ENCODE measurements at regions of chr5 and their contacts with region 1.

Region 1: DNA sequence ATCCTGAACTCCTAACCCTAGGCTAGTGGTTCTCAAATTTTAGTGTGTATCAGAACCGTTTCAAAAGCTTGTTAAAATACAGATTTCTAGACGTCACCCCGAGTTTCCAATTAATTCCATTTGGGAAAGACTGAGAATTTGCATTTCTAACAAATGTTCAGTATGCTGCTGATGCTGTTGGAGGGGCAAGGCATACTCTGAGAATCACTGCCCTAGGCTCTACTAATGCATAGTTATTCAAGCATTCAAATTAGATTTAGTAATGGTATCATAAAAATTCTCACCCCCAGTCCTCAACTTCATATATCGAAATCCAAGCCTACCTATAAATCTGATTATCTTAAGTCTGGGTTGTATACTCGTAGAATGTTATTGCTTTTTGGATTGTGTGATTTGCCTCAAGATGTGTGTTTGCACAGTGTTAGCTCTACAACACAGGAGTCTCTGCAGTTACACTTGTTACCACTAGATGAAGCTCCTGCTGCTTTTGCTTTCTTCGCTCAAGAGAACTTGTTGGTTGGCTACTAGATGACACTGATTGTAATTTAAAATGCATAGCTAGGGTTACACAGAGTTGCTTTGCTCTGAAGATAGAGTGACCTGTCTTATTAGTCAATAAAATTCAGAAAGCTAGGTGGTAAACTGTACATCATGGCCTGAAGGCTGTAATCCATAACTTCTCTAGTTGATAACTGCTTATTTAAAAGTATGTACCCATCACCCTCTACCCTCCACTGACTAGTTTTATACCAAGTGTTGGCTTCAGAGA is 7.5 kb upstream of the ERAP2 start:
- DNase-seq: no peak
- H3K4me3 Mint-ChIP-seq: no peak overlapping the region
- H3K27ac Mint-ChIP-seq: peak overlapping the region; percentile 82
- H3K4me1 Mint-ChIP-seq: peaks cover 54% of the 10 kb centered on the region
- H3K27me3 Mint-ChIP-seq: no peaks in the 10 kb centered on the region

Region 2: GRCh38 chr5:96896806-96897205 is 28.0 kb after region 1 on chr5:
- CTCF ChIA-PET with region 1: interaction called, 23 read pairs
- POLR2A ChIA-PET with region 1: interaction called, 50 read pairs
- DNase-seq: no peak
- H3K4me3 Mint-ChIP-seq: peak overlapping the region; percentile 67
- H3K27ac Mint-ChIP-seq: peak overlapping the region; percentile 87
- H3K4me1 Mint-ChIP-seq: peaks cover 47% of the 10 kb centered on the region
- H3K27me3 Mint-ChIP-seq: no peaks in the 10 kb centered on the region

Region 3: DNA sequence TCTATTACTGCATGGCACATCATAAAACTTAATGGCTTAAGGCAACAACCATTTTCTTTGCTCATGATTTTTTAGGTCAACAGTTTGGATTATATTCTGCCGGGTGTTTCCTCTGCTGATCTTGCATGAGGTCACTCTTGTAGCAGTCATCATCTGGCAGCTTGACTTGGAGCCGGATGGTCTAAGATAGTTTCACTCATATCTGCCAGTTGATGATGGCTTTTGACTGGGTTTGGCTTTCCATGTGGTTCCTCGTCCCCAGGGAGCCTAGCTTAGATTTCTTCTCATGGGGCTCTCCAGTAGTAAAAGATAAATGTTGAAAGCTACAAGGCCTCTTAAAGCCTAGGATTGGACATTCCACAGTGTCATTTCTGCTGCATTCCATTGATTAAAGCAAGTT is 94.5 kb after region 1 on chr5:
- CTCF ChIA-PET with region 1: interaction called, 14 read pairs
- POLR2A ChIA-PET with region 1: interaction called, 7 read pairs
- DNase-seq: peak; percentile 36
- H3K4me3 Mint-ChIP-seq: no peak overlapping the region
- H3K27ac Mint-ChIP-seq: peak overlapping the region; percentile 74
- H3K4me1 Mint-ChIP-seq: peaks cover 56% of the 10 kb centered on the region
- H3K27me3 Mint-ChIP-seq: no peaks in the 10 kb centered on the region

Region 4: GRCh38 chr5:97142521-97143254 is 273.9 kb after region 1 on chr5 and contains the start of gene LIX1:
- CTCF ChIA-PET with region 1: interaction called, 20 read pairs
- POLR2A ChIA-PET with region 1: interaction called, 3 read pairs
- DNase-seq: peak; percentile 37
- H3K4me3 Mint-ChIP-seq: no peak within 1 kb of the TSS
- H3K27ac Mint-ChIP-seq: no peak within 1 kb of the TSS
- H3K4me1 Mint-ChIP-seq: no peaks in the 10 kb centered on the region
- H3K27me3 Mint-ChIP-seq: peaks cover 19% of the 10 kb centered on the region
- total RNA-seq, gene LIX1: not detected

Region 5: GRCh38 chr5:97167435-97167834 is 298.6 kb after region 1 on chr5:
- CTCF ChIA-PET with region 1: interaction called, 89 read pairs
- POLR2A ChIA-PET with region 1: interaction called, 3 read pairs
- DNase-seq: no peak
- H3K4me3 Mint-ChIP-seq: peak overlapping the region; percentile 51
- H3K27ac Mint-ChIP-seq: peak overlapping the region; percentile 73
- H3K4me1 Mint-ChIP-seq: peaks cover 28% of the 10 kb centered on the region
- H3K27me3 Mint-ChIP-seq: no peaks in the 10 kb centered on the region

Measured in activated CD4-positive, alpha-beta memory T cell treated with anti-CD3 and anti-CD28 coated beads, Interleukin-2, amount 10 ng/mL, durations not matched to agents 7 days and 5 days (primary cell).